AG04450 (cell line): ENCODE measurements at regions of chr5 and their contacts with region 1.

Region 1: GRCh38 chr5:80686757-80687156 is 32.0 kb upstream of the DHFR start:
- DNase-seq: no peak
- H3K4me3 ChIP-seq: no peak overlapping the region
- H3K27ac ChIP-seq: no peak overlapping the region
- H3K27me3 ChIP-seq: no peaks in the 10 kb centered on the region
- CTCF ChIP-seq: peak; percentile 44

Region 2: DNA sequence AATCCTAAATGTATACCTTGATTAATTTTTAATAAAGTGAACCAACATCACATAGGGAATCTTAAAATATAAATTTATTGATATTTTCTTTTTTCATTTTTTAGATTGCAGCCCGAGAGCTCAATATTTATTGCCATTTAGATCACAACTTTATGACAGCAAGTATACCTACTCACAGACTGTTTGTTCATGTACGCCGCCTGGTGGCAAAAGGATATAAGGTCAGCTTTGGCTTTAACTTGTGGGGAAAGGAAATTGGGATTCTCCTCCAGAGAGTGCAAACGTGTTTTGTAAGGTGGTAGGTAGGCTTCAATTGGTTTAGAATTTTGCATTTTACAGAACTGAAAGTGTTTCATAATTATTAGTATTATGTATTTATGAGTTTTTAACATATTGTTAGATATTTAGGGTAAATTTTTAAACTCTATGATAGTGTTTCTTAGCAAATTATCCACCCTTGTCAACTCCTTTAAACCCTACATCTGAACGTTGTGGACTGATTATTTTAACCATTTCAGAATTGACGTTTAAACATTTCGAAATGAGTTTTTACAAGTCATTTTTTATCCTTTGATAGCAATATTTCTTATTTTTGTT is 14.5 kb before region 1 on chr5:
- CTCF ChIA-PET with region 1: interaction called, 10 read pairs
- POLR2A ChIA-PET with region 1: no interaction called
- DNase-seq: peak; percentile 24
- H3K4me3 ChIP-seq: no peak overlapping the region
- H3K27ac ChIP-seq: no peak overlapping the region
- H3K27me3 ChIP-seq: no peaks in the 10 kb centered on the region
- CTCF ChIP-seq: peak; percentile 89

Region 3: GRCh38 chr5:80804332-80804731 is 117.6 kb after region 1 on chr5:
- CTCF ChIA-PET with region 1: no interaction called
- POLR2A ChIA-PET with region 1: no interaction called
- DNase-seq: no peak
- H3K4me3 ChIP-seq: no peak overlapping the region
- H3K27ac ChIP-seq: no peak overlapping the region
- H3K27me3 ChIP-seq: no peaks in the 10 kb centered on the region
- CTCF ChIP-seq: no peak

Region 4: GRCh38 chr5:81105261-81105877 is 418.6 kb after region 1 on chr5:
- CTCF ChIA-PET with region 1: interaction called, 19 read pairs
- POLR2A ChIA-PET with region 1: no interaction called
- DNase-seq: no peak
- H3K4me3 ChIP-seq: no peak overlapping the region
- H3K27ac ChIP-seq: no peak overlapping the region
- H3K27me3 ChIP-seq: no peaks in the 10 kb centered on the region
- CTCF ChIP-seq: no peak

Region 5: DNA sequence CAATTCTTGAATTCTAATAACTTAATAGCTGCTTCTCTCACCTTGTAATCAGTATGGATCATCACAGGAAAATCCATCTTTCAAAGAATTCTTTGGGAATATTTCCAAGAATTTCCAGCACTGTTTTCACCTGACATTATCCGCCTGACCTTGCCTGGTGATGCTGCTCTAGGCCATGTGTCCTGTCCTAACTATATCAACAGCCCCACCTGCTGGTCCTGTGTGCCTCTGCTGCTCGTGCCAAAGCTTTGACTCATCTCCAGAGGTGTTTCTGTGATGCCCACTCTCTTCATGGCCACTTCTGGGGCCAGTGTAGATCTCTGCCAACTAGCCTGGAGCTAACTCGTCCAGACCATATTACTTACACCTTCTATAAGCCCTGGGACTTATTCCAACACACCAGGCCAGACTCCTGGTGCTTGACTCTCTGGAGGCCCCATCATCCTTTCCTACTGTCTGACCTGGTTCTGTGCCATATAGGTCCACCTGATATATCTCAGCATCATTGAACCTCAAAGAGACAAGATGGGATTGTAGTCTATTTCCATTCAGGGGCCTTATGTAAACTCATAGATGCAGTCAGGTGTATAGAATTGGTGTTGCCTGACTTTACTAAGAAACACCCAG is 478.8 kb after region 1 on chr5:
- CTCF ChIA-PET with region 1: interaction called, 21 read pairs
- POLR2A ChIA-PET with region 1: no interaction called
- DNase-seq: peak; percentile 29
- H3K4me3 ChIP-seq: no peak overlapping the region
- H3K27ac ChIP-seq: no peak overlapping the region
- H3K27me3 ChIP-seq: no peaks in the 10 kb centered on the region
- CTCF ChIP-seq: peak; percentile 80